Pancreas (tissue), 10 donors: ENCODE measurements at regions of chr10 and their contacts with region 1.

Region 1: GRCh38 chr10:108544494-108545120 is 1378.7 kb downstream of the XPNPEP1 start:
- DNase-seq: peak; percentile 38 to 87 (median 73)
- ATAC-seq: peak; percentile 56 to 92 (median 89)
- H3K4me3 ChIP-seq: no peak overlapping the region
- H3K27ac ChIP-seq: no peak overlapping the region
- H3K4me1 ChIP-seq: no peaks in the 10 kb centered on the region
- H3K27me3 ChIP-seq: no peaks in the 10 kb centered on the region
- CTCF ChIP-seq: peak; percentile 78 to 91 (median 88)

Region 2: DNA sequence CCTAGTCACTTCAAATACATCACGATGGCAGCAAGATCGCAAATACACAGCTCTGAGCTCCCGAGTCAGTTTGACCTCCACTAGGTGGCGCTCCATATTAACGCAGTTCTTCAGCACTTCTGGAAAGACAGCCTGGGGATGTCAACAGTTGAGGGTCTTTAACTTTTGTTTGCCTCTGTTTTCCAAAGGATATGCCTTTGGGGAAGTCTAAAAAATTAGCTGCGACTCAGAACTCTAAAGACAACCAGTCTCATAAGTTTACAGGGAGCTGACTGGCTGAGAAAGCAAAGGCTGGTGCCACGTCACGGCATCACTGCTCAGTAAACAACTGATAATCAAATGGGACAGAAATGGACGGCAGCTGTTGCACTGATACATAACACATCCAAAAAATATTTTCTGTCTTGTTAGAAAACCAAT is 1838.9 kb before region 1 on chr10:
- intact Hi-C with region 1: loop called in 1 of 3 experiments (anchors 10 kb)
- DNase-seq: peak in 4 of 6 donors; percentile 35 to 60 (median 42)
- ATAC-seq: peak; percentile 56 to 80 (median 71)
- H3K4me3 ChIP-seq: no peak overlapping the region
- H3K27ac ChIP-seq: no peak overlapping the region
- H3K4me1 ChIP-seq: no peaks in the 10 kb centered on the region
- H3K27me3 ChIP-seq: no peaks in the 10 kb centered on the region
- CTCF ChIP-seq: peak; percentile 47 to 76 (median 70)

Region 3: DNA sequence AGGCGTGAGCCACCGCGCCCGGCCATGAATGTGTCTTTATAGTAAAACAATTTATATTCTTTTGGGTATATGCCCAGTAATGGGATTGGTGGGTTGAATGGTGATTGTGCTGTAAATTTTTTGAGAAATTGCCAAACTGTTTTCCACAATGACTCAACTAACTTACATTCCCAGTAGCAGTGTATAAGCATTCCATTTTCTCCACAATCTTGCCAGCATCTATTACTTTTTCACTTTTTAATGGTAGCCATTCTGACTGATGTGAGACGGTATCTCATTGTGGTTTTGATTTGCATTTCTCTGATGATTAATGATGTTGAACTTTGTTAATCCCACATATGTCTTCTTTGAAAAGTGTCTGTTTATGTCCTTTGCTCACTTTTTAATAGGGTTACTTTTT is 190.8 kb after region 1 on chr10:
- intact Hi-C with region 1: no loop called
- DNase-seq: no peak
- ATAC-seq: no peak
- H3K4me3 ChIP-seq: no peak overlapping the region
- H3K27ac ChIP-seq: no peak overlapping the region
- H3K4me1 ChIP-seq: no peaks in the 10 kb centered on the region
- H3K27me3 ChIP-seq: no peaks in the 10 kb centered on the region
- CTCF ChIP-seq: no peak